ENCODE measurements at regions of chr1 and their contacts with region 1.

Region 1: GRCh38 chr1:211775170-211775569 is 55.4 kb downstream of the LPGAT1 start:
- DNase-seq: no peak
- H3K4me3 ChIP-seq: no peak overlapping the region
- H3K27ac ChIP-seq: no peak overlapping the region
- H3K4me1 ChIP-seq: no peaks in the 10 kb centered on the region
- H3K27me3 ChIP-seq: no peaks in the 10 kb centered on the region
- CTCF ChIP-seq: no peak
- POLR2A ChIP-seq: no peak

Region 2: GRCh38 chr1:211843018-211843417 is 67.8 kb after region 1 on chr1:
- intact Hi-C with region 1: loop called (anchors 2 kb)
- DNase-seq: no peak
- H3K4me3 ChIP-seq: peak overlapping the region in 1 of 3 donors; percentile 35
- H3K27ac ChIP-seq: peak overlapping the region in 1 of 2 donors; percentile 30
- H3K4me1 ChIP-seq: no peaks in the 10 kb centered on the region
- H3K27me3 ChIP-seq: no peaks in the 10 kb centered on the region
- CTCF ChIP-seq: no peak
- POLR2A ChIP-seq: no peak

Measured in breast epithelium (tissue), 4 donors.